ENCODE measurements at regions of chr15 and their contacts with region 1.

Region 1: GRCh38 chr15:37015035-37015434 is 85.3 kb downstream of the MEIS2 start:
- DNase-seq: peak in 1 of 2 experiments; percentile 8
- H3K4me3 ChIP-seq: no peak overlapping the region
- H3K4me3 Mint-ChIP-seq: no peak overlapping the region
- H3K27ac Mint-ChIP-seq: peak overlapping the region; percentile 8
- H3K4me1 ChIP-seq: peaks cover 46% of the 10 kb centered on the region
- H3K4me1 Mint-ChIP-seq: peaks cover 17% of the 10 kb centered on the region
- H3K27me3 ChIP-seq: no peaks in the 10 kb centered on the region
- H3K27me3 Mint-ChIP-seq: no peaks in the 10 kb centered on the region
- CTCF ChIP-seq: no peak

Region 2: GRCh38 chr15:37034835-37035748 is 20.1 kb after region 1 on chr15:
- CTCF ChIA-PET with region 1: no interaction called
- POLR2A ChIA-PET with region 1: no interaction called
- intact Hi-C with region 1: loop called (anchors 1 kb)
- DNase-seq: peak; percentile 49 to 63
- H3K4me3 ChIP-seq: no peak overlapping the region
- H3K4me3 Mint-ChIP-seq: no peak overlapping the region
- H3K27ac Mint-ChIP-seq: peak overlapping the region; percentile 30
- H3K4me1 ChIP-seq: peaks cover 19% of the 10 kb centered on the region
- H3K4me1 Mint-ChIP-seq: peaks cover 7% of the 10 kb centered on the region
- H3K27me3 ChIP-seq: no peaks in the 10 kb centered on the region
- H3K27me3 Mint-ChIP-seq: no peaks in the 10 kb centered on the region
- CTCF ChIP-seq: no peak

Region 3: GRCh38 chr15:37041042-37041441 is 26.0 kb after region 1 on chr15:
- CTCF ChIA-PET with region 1: no interaction called
- POLR2A ChIA-PET with region 1: no interaction called
- intact Hi-C with region 1: loop called (anchors 2 kb)
- DNase-seq: no peak
- H3K4me3 ChIP-seq: no peak overlapping the region
- H3K4me3 Mint-ChIP-seq: no peak overlapping the region
- H3K27ac Mint-ChIP-seq: no peak overlapping the region
- H3K4me1 ChIP-seq: peaks cover 26% of the 10 kb centered on the region
- H3K4me1 Mint-ChIP-seq: peaks cover 18% of the 10 kb centered on the region
- H3K27me3 ChIP-seq: no peaks in the 10 kb centered on the region
- H3K27me3 Mint-ChIP-seq: no peaks in the 10 kb centered on the region
- CTCF ChIP-seq: no peak

Region 4: GRCh38 chr15:37100109-37100965 is 85.3 kb after region 1 on chr15 and contains the start of gene MEIS2:
- CTCF ChIA-PET with region 1: no interaction called
- POLR2A ChIA-PET with region 1: interaction called, 4 read pairs
- intact Hi-C with region 1: loop called (anchors 5 kb)
- DNase-seq: peak; percentile 92 to 96
- H3K4me3 ChIP-seq: peak within 1 kb of the TSS; percentile 89
- H3K4me3 Mint-ChIP-seq: peak within 1 kb of the TSS; percentile 90
- H3K27ac Mint-ChIP-seq: peak within 1 kb of the TSS; percentile 91
- H3K4me1 ChIP-seq: peaks cover 5% of the 10 kb centered on the region; the same call in 1 of the 2 replicates
- H3K4me1 Mint-ChIP-seq: peaks cover 17% of the 10 kb centered on the region
- H3K27me3 ChIP-seq: no peaks in the 10 kb centered on the region
- H3K27me3 Mint-ChIP-seq: no peaks in the 10 kb centered on the region
- CTCF ChIP-seq: no peak
- total RNA-seq, gene MEIS2: 28.5 and 28.7 TPM in 2 replicates

Measured in Caco-2 (cell line).